Ascending aorta (tissue), 2 donors: ENCODE measurements at regions of chr11 and their contacts with region 1.

Region 1: GRCh38 chr11:83071567-83072349 is at the start of gene RAB30:
- DNase-seq: peak; percentile 98 to 99
- H3K4me3 ChIP-seq: peak within 1 kb of the TSS; percentile 71 to 74
- H3K27ac ChIP-seq: peak within 1 kb of the TSS; percentile 94 to 95
- H3K4me1 ChIP-seq: peaks cover 11 to 21% of the 10 kb centered on the region in 2 donors
- H3K27me3 ChIP-seq: no peaks in the 10 kb centered on the region
- CTCF ChIP-seq: no peak
- total RNA-seq, gene RAB30: 7.7 TPM

Region 2: DNA sequence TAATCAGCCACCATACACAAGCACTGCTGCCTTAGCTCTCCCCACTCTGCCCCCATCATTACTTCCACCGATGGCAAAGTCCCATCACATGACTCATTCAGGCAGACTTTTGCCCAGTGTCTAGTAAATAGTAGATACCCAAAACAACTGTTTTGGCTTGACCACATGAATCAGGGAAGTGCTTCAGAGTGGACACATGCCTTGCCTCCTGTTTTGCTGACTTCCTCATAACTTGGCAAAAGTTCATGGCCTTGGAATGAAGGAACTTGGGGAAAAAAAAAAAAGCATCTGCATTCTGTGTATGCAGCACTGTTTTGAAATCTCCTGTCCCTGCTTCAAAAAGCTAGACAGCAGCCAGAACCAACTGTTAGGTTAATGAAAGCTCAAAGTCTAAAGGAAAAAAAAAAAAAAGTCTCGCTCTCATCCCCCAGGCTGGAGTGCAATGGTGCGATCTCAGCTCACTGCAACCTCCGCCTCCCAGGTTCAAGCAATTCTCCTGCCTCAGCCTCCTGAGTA is 673.4 kb before region 1 on chr11:
- intact Hi-C with region 1: no loop called
- DNase-seq: no peak
- H3K4me3 ChIP-seq: no peak overlapping the region
- H3K27ac ChIP-seq: no peak overlapping the region
- H3K4me1 ChIP-seq: no peaks in the 10 kb centered on the region
- H3K27me3 ChIP-seq: no peaks in the 10 kb centered on the region
- CTCF ChIP-seq: no peak

Region 3: DNA sequence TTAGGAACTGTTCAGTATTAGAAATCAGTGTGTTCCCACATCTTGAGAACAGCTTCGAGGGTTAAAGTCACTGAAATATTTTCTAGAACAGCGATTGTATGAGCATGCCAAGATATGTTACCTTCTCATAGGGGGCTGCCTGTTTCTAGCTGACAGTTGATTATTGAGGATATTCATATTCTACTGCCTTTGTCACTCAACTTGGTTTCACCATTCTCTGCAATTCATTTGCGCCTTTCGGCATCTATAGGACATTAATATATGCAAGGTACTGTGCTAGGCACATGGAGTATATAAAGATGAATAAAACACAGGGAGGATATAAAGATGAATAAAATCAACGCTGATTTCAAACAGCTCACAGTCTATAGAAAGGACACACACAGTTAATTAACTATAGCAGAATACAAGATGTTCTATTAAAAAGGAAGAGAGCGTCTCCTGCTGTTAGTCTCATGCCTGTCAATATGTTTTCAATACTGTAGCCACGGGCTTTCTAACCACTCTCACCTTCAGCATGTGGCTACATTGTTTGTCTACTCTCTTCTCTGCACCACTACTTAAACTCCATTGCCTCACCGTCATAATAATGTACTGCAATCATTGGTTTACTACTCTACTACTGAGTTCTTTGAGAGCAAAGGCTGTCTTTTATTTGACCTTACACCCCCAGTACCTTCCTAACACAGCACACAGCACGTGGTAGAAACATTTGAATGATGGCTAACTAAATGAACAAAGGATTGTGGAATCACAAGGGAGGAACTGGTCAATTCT is 81.9 kb before region 1 on chr11:
- intact Hi-C with region 1: loop called (anchors 5 kb)
- DNase-seq: no peak
- H3K4me3 ChIP-seq: no peak overlapping the region
- H3K27ac ChIP-seq: no peak overlapping the region
- H3K4me1 ChIP-seq: no peaks in the 10 kb centered on the region
- H3K27me3 ChIP-seq: no peaks in the 10 kb centered on the region
- CTCF ChIP-seq: no peak

Region 4: GRCh38 chr11:83051760-83052671 is 19.7 kb before region 1 on chr11:
- intact Hi-C with region 1: loop called (anchors 1 kb)
- DNase-seq: peak in 1 of 2 donors; percentile 79
- H3K4me3 ChIP-seq: no peak overlapping the region
- H3K27ac ChIP-seq: peak overlapping the region; percentile 89 to 92
- H3K4me1 ChIP-seq: peaks cover 0 to 22% of the 10 kb centered on the region in 2 donors
- H3K27me3 ChIP-seq: no peaks in the 10 kb centered on the region
- CTCF ChIP-seq: no peak

Region 5: DNA sequence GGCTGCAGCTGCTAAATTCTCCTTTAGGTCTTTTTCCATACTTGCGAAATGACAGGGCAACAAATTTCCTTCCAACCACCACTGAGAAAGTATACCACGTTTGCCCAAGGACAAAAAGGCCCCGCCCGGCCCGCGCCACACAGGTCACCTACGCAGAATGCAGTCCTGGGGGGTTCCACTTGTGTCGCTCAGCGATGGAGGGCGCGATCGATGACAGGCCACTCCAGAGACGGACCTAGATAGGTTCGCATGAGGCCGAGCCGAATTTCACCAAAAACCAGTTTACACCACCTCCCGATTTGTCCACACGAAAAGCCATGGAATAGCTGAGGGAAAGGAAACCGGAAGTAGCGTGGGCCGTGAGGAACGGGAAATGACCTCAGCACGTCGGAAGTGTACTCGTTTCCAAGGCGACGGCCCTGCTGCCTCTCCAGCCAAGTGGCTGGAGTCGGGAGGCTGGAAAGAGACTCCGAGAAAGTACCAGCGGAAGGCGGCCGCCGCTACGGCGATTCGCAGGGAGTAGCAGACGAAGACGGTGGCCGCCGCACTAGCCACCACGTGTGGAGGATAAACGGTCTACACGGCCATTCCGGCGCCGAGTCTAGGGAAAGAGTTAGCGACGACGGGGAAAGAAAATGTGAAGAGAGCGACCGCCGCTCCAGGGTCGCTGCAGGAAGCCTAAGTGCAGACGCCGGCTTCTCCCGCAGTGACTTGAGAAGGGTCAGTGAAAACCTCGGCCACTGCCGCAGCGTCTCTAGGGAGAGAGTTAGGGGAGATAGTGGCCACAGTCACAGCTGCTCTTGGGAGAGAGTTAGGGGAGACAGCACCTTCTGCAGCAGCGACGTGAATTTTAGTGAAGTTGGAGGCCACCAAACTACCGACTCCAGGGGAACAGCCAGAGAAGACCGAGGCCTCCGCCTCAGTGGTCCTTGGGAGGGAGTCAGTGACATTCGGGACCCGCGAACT is 121.8 kb after region 1 on chr11 and contains the start of gene ANKRD42:
- intact Hi-C with region 1: loop called (anchors 1 kb)
- DNase-seq: peak; percentile 78 to 97
- H3K4me3 ChIP-seq: peak within 1 kb of the TSS; percentile 73 to 93
- H3K27ac ChIP-seq: peak within 1 kb of the TSS; percentile 86 to 92
- H3K4me1 ChIP-seq: peaks cover 4 to 23% of the 10 kb centered on the region in 2 donors
- H3K27me3 ChIP-seq: no peaks in the 10 kb centered on the region
- CTCF ChIP-seq: no peak
- total RNA-seq, gene ANKRD42: 25.1 TPM

Region 6: GRCh38 chr11:83257761-83258168 is 186.0 kb after region 1 on chr11:
- intact Hi-C with region 1: no loop called
- DNase-seq: no peak
- H3K4me3 ChIP-seq: no peak overlapping the region
- H3K27ac ChIP-seq: peak overlapping the region; percentile 53 to 57
- H3K4me1 ChIP-seq: peaks cover 0 to 6% of the 10 kb centered on the region in 2 donors
- H3K27me3 ChIP-seq: no peaks in the 10 kb centered on the region
- CTCF ChIP-seq: no peak